ENCODE measurements at regions of chrX and their contacts with region 1.

Region 1: DNA sequence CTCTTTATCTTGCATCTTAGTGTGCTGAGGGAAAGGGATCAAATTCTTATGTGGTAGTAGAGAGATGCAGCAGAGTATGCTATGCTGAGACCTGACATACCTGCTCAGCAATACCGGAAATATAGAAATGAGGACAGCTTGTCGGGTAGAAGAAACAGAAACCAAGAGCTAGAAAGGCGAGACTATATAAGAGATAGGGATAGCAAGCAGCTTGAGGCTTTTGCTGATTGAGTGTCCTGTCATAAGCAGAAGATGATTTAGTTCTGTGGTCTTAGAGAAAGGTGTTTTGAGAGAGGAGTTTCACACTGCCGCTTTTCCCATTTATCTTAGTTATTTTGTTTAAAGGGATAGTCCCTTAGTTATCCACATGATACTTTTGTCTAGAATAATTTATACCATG is 31.7 kb downstream of the USP9X start:
- DNase-seq: peak; percentile 41
- ATAC-seq: peak; percentile 82
- H3K4me3 Mint-ChIP-seq: peak overlapping the region; percentile 57
- H3K27ac Mint-ChIP-seq: peak overlapping the region; percentile 82
- H3K4me1 Mint-ChIP-seq: peaks cover 61% of the 10 kb centered on the region
- H3K27me3 Mint-ChIP-seq: no peaks in the 10 kb centered on the region

Region 2: DNA sequence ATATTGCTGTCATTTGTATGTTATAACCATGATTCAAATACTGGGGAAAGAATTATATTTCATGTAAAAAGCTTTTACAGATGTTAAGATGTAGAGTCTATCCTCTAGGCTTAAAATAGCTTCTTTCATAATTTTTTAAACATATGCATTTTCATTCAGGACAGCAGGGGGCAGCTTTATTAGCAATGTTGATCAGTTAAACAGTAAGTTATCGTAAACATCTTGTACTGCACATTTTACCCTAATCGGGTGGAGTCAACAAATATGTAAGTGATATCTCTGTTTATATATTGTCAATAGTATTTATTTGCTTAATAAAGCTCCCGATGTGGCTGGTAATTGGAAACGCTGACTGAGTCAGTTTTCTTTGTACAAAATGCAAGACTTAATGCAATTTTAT is 239.1 kb before region 1 on chrX:
- CTCF ChIA-PET with region 1: interaction called, 16 read pairs
- DNase-seq: no peak
- ATAC-seq: no peak
- H3K4me3 Mint-ChIP-seq: no peak overlapping the region
- H3K27ac Mint-ChIP-seq: no peak overlapping the region
- H3K4me1 Mint-ChIP-seq: no peaks in the 10 kb centered on the region
- H3K27me3 Mint-ChIP-seq: no peaks in the 10 kb centered on the region

Region 3: GRCh38 chrX:41084044-41084892 is 32.7 kb before region 1 on chrX:
- CTCF ChIA-PET with region 1: interaction called, 19 read pairs
- DNase-seq: peak; percentile 95
- ATAC-seq: peak; percentile 73
- H3K4me3 Mint-ChIP-seq: peak overlapping the region; percentile 87
- H3K27ac Mint-ChIP-seq: peak overlapping the region; percentile 99
- H3K4me1 Mint-ChIP-seq: peaks cover 19% of the 10 kb centered on the region
- H3K27me3 Mint-ChIP-seq: no peaks in the 10 kb centered on the region

Measured in activated CD8-positive, alpha-beta memory T cell treated with anti-CD3 and anti-CD28 coated beads, Interleukin-2, amount 10 ng/mL, durations not matched to agents 7 days and 5 days (primary cell).